Activated CD4-positive, alpha-beta memory T cell treated with anti-CD3 and anti-CD28 coated beads for 36 hours (primary cell): ENCODE measurements at regions of chrX and their contacts with region 1.

Region 1: GRCh38 chrX:20442597-20442996 is 175.9 kb upstream of the RPS6KA3 start:
- DNase-seq: peak; percentile 89
- H3K4me3 Mint-ChIP-seq: no peak overlapping the region
- H3K27ac Mint-ChIP-seq: no peak overlapping the region
- H3K4me1 Mint-ChIP-seq: peaks cover 60% of the 10 kb centered on the region
- H3K27me3 Mint-ChIP-seq: no peaks in the 10 kb centered on the region

Region 2: DNA sequence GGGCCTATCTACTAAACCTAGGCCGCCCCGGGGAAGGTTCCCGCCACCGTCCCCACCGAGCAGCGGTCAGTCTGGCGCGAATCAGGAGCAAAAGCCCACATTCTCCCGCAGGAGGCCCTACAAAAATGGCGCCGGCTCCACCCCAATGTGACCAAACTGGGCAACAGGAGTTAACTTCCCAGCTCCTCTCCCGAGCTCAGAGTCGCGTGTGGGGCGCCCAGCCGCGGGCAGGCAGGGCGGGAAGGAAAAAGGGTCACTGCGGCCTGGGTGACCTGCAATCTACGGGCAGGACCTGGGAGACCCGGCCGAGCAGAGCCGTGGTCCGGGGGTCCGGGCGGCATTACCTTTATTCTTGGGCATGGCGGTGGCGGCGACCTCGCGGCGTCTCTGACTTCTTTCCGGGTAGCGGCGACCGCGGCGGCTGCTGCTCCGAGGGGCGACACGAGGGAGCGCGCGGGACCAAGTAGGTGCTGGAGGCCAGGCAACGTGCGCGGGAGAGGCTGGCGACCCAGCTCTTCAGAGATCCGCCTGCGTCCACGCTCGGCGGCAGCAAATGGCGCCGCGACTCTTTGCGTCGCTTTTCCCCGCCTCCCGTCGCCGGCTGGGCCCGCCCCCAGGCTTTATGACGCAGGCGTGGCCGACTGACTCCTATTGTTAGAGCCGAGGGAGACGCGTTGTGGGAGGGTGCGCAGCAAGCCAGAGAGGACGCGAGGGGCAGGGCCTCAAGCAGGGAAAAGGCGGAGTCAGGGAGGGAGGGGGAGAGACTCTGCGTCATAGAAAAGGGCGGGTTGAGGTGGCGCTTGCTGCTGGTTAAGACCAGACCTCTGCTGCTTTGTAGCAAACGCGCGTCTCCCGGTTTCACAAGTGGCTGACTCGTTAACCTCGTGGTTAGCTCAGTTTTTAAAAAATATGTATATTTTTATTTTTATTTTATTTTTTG is 301.0 kb before region 1 on chrX and contains the start of gene EIF1AX:
- CTCF ChIA-PET with region 1: no interaction called
- POLR2A ChIA-PET with region 1: no interaction called
- intact Hi-C with region 1: loop called (anchors 5 kb)
- DNase-seq: peak; percentile 97
- H3K4me3 Mint-ChIP-seq: peak within 1 kb of the TSS; percentile 83
- H3K27ac Mint-ChIP-seq: peak within 1 kb of the TSS; percentile 80
- H3K4me1 Mint-ChIP-seq: peaks cover 39% of the 10 kb centered on the region
- H3K27me3 Mint-ChIP-seq: no peaks in the 10 kb centered on the region
- total RNA-seq, gene EIF1AX: 117 to 121 TPM

Region 3: DNA sequence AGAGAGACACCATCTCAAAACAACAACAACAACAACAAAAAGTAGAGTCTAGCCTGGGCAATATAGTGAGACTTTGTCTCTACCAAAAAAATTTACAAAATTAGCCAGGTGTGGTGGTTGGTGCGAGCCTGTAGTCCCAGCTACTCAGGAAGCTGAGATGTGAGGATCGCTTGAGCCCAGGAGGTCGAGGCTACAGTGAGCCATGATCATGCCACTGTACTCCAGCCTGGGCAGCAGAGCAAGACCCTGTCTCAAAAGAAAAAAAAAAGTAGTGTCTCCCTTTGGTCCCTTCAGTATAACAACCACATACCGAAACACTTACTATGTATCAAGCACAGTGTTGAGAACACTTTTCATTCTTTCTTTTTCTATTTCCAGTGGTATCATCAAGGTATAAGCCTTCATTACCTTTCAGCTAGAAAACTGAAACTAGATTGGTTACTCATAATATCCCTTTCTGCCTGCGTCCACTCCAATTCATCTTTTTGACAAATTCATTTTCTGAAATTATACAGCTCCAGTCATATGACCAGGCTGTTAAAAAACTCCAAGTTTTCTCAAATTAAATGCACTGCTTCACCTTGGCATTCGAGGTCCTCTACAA is 230.0 kb before region 1 on chrX:
- CTCF ChIA-PET with region 1: no interaction called
- POLR2A ChIA-PET with region 1: no interaction called
- intact Hi-C with region 1: loop called (anchors 5 kb)
- DNase-seq: no peak
- H3K4me3 Mint-ChIP-seq: no peak overlapping the region
- H3K27ac Mint-ChIP-seq: peak overlapping the region; percentile 28
- H3K4me1 Mint-ChIP-seq: peaks cover 54% of the 10 kb centered on the region
- H3K27me3 Mint-ChIP-seq: no peaks in the 10 kb centered on the region

Region 4: GRCh38 chrX:20252381-20253231 is 190.0 kb before region 1 on chrX:
- CTCF ChIA-PET with region 1: interaction called, 14 read pairs
- POLR2A ChIA-PET with region 1: no interaction called
- intact Hi-C with region 1: loop called (anchors 1 kb)
- DNase-seq: peak; percentile 78
- H3K4me3 Mint-ChIP-seq: peak overlapping the region; percentile 23
- H3K27ac Mint-ChIP-seq: peak overlapping the region; percentile 88
- H3K4me1 Mint-ChIP-seq: peaks cover 52% of the 10 kb centered on the region
- H3K27me3 Mint-ChIP-seq: no peaks in the 10 kb centered on the region

Region 5: DNA sequence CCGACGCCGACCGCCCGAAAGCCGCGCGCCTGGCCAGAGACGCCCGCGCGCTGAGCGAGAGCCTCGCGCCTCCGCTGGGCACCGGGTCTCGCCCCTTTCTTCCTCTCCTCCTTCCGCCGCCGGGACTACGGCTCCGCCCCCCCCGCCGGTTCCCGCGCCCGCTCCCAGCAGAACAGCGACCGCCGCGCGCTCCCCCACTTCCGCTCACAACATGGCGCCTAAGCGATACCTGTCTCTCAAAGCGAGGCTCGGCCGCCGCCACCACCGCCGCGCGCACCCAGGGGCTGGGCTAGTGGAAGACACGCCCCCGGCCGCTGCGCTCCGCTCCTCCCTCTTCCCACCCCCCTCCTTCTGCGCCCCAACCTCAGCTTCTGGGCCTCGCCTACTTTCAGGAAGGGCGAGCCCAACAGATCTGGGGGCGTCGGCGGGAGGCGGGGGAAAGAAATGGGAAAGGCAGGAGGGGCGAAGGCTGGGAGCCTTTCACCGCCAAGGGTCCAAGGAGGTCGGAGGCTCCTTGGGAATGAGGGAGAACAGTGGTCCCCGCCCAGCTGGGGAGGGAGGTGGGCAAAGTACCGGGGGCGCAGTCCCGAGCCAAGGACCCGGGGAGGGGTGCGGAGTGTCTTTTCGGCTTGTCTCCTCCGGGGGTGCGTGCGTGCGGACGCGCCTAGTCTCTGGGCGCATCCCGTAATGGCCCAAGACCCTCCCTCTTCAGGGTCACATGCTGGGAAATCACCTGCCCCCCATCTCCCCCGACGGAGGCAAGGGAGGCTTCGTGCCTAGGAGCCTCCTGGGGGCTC is 175.6 kb before region 1 on chrX and contains the start of gene RPS6KA3:
- CTCF ChIA-PET with region 1: no interaction called
- POLR2A ChIA-PET with region 1: no interaction called
- intact Hi-C with region 1: loop called (anchors 5 kb)
- DNase-seq: peak; percentile 93
- H3K4me3 Mint-ChIP-seq: peak within 1 kb of the TSS; percentile 95
- H3K27ac Mint-ChIP-seq: peak within 1 kb of the TSS; percentile 99
- H3K4me1 Mint-ChIP-seq: peaks cover 18% of the 10 kb centered on the region
- H3K27me3 Mint-ChIP-seq: no peaks in the 10 kb centered on the region
- total RNA-seq, gene RPS6KA3: 51.8 to 52.0 TPM

Region 6: DNA sequence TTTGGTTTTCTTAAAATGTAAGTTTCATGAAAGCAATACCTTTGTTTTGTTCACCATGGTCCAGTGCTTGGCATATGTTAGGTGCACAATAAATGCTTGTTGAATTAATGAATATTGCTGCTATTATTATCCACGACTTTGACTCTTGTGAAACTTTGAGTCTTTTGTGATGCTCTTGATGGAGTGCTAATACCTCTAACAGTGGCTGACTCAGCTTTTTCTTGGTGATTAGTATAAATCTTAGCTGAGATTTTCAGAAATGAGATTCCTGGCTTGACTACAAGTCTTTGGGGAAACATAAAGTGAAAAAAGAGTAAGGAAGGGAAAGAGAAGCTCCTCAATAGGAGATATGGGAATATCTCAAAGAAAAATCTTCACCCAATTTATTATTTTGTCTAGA is 199.4 kb after region 1 on chrX:
- CTCF ChIA-PET with region 1: no interaction called
- POLR2A ChIA-PET with region 1: no interaction called
- intact Hi-C with region 1: no loop called
- DNase-seq: no peak
- H3K4me3 Mint-ChIP-seq: no peak overlapping the region
- H3K27ac Mint-ChIP-seq: no peak overlapping the region
- H3K4me1 Mint-ChIP-seq: no peaks in the 10 kb centered on the region
- H3K27me3 Mint-ChIP-seq: no peaks in the 10 kb centered on the region